Heart left ventricle (tissue), 16 donors: ENCODE measurements at regions of chr1 and their contacts with region 1.

Region 1: DNA sequence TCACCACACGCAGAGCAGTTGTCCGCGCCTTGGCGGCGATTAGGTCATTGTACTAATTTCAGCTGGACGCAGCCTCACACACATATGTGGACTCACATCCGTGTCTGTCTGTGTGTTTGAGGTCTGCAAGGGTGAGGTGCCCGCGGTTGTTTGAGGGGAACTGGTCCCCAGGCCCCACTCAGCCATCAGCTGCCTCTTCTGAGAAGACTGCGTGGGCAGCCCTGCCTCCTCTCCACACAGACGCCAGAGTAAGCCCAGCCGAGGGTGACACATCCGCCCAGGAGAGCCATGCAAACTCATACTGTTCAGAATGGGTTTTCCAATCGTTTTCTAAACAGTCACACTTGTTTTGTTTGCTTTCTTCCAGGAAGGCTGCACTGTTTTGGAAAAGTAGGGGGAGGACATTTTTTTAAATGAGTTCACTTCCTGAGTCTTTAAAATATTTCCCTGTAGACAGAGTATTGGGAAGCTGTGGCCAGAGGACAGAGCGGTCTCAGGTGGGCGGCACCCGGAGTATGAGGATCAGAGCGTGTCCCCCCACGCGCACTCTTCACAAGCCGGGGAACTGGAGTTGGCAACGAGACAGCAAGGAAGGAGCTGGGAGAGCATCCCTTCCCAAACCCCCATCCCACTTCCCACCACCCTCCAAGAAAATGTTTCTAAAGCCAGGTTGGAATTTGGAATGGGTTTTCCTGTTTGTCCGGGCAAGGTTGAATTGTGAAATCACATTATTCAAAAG is 53.3 kb downstream of the TOMM20 start:
- DNase-seq: peak; percentile 78 to 86 (median 86)
- ATAC-seq: peak; percentile 70 to 82 (median 72)
- H3K4me3 ChIP-seq: peak overlapping the region in 10 of 12 donors; percentile 1 to 33 (median 16)
- H3K27ac ChIP-seq: peak overlapping the region; percentile 91 to 99 (median 94)
- H3K4me1 ChIP-seq: peaks cover 9 to 82% (median 67%) of the 10 kb centered on the region in 12 donors
- H3K27me3 ChIP-seq: no peaks in the 10 kb centered on the region
- CTCF ChIP-seq: no peak
- POLR2A ChIP-seq: peak in 1 of 2 donors; percentile 41

Region 2: GRCh38 chr1:234881893-234882771 is 193.2 kb before region 1 on chr1:
- intact Hi-C with region 1: loop called in 5 of 10 experiments (anchors 5 to 10 kb)
- DNase-seq: no peak
- ATAC-seq: no peak
- H3K4me3 ChIP-seq: no peak overlapping the region
- H3K27ac ChIP-seq: no peak overlapping the region
- H3K4me1 ChIP-seq: peaks cover 0 to 50% (median 27%) of the 10 kb centered on the region in 12 donors
- H3K27me3 ChIP-seq: no peaks in the 10 kb centered on the region
- CTCF ChIP-seq: no peak
- POLR2A ChIP-seq: no peak

Region 3: DNA sequence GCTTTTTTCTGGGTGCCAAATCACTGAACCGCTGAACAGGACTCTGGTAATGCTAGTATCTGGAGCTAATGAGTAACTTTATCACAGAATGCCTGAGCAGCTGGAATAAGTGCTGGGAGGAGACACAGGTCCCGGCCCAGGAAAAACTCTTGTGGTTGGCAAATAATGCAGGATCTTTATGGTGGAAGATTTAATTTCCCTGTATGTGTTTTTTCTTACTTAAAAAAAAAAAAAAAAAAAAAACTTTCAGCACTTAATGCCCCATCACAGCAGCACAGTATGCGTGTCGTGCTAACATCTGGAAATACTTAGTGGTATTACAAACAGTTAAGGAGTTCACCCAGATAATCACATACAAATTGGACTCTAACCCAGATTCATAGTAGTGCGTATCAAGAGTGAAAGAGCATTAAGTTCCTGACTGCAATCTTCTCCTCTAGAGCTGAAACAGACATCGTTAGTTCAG is 167.4 kb before region 1 on chr1:
- intact Hi-C with region 1: loop called in 5 of 10 experiments (anchors 5 to 10 kb)
- DNase-seq: no peak
- ATAC-seq: peak; percentile 46 to 81 (median 60)
- H3K4me3 ChIP-seq: no peak overlapping the region
- H3K27ac ChIP-seq: peak overlapping the region; percentile 0 to 90 (median 65)
- H3K4me1 ChIP-seq: peaks cover 6 to 54% (median 30%) of the 10 kb centered on the region in 12 donors
- H3K27me3 ChIP-seq: no peaks in the 10 kb centered on the region
- CTCF ChIP-seq: no peak
- POLR2A ChIP-seq: no peak

Region 4: DNA sequence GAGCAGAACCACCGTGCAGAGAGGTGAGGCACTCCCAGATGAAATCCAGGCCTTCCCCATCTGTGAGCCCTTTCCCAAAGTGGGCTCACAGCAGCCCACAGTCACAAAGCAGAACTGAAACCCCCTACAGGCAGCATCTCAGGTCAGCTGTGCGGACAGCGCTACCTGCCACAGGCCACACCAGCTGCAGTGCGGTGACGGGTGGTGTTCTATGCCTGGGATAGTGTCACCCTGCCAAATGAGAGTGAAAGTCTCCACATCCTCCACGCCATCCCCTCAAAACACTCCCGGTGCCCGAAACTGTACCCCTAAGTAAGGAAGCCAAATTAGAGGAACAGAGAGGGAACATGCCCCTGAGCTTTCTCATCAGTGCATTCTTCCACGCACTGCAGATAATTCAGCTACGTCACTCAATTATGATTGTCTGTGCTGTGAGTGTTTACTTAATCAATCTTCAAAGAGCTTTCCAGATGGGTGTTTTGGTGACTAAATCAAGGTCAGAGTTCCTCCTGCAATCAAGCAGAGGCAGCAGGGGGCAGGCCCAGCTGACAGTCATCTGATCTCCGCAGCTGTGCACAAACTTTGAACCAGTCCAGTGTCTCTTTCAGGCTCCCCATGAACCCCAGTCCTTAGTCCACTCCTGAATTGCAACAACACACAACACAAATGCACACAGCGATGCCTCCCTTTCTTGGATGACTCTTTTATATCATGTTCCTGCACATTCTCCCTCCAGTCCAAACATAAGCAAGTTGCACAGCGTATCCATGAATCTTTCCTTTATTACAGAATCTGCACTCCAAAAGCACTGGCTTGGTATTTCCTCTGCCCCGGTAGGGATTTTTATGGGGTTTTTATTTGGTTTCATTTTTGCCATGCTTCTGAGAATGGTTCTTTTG is 96.7 kb before region 1 on chr1:
- intact Hi-C with region 1: loop called in 4 of 10 experiments (anchors 5 kb)
- DNase-seq: peak in 4 of 5 donors; percentile 48 to 71 (median 60)
- ATAC-seq: peak; percentile 7 to 51 (median 22)
- H3K4me3 ChIP-seq: peak overlapping the region in 2 of 12 donors; percentile 15 to 55
- H3K27ac ChIP-seq: peak overlapping the region; percentile 71 to 98 (median 88)
- H3K4me1 ChIP-seq: peaks cover 15 to 91% (median 45%) of the 10 kb centered on the region in 12 donors
- H3K27me3 ChIP-seq: no peaks in the 10 kb centered on the region
- CTCF ChIP-seq: peak in 5 of 12 donors; percentile 6 to 39 (median 19)
- POLR2A ChIP-seq: no peak

Region 5: GRCh38 chr1:235004840-235005391 is 70.4 kb before region 1 on chr1:
- intact Hi-C with region 1: loop called in 1 of 10 experiments (anchors 5 kb)
- DNase-seq: no peak
- ATAC-seq: no peak
- H3K4me3 ChIP-seq: no peak overlapping the region
- H3K27ac ChIP-seq: no peak overlapping the region
- H3K4me1 ChIP-seq: peaks cover 0 to 33% (median 0%) of the 10 kb centered on the region in 12 donors
- H3K27me3 ChIP-seq: no peaks in the 10 kb centered on the region
- CTCF ChIP-seq: no peak
- POLR2A ChIP-seq: no peak

Region 6: DNA sequence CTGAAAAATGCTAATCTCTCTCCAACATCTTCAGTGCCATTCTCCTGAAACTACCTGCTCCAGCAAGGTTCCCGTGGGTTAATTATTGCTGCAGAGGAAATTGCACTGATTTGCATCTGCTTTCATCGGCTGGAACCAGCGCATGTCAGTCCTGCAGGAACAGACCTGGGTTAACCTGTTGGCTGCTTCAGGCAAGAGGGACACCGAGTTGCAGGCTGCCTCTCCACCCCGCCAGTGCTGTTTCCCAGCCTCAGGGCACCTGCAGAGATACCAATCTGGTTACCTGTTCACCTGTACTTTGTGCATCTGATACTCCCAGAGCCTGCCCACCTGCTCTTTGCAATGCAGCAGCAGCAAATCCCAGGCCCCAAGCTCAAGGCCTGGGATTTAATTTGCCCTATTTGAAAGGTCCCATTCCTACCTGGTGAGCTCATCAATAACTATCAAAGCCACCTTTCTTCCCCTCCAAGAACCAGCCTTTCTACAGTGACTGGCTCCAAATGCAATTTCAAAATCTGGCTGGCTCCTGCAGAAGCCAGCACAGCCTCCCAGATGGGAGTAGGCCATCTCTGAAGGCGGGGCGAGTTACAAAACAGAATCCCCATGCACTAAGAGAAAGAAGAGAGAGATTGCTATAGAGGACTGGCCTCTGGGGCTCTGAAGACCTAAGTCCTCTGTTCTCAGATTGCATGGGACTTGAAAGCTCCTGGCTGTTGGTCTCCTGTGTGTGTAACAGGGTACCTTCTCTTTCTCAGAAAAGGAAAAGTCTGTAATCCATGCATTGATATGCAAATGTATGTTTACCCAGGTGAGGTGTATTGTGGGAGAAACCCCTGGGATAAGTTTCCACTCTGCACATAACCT is 14.5 kb before region 1 on chr1:
- intact Hi-C with region 1: no loop called
- DNase-seq: no peak
- ATAC-seq: peak in 3 of 4 donors; percentile 37 to 66 (median 41)
- H3K4me3 ChIP-seq: no peak overlapping the region
- H3K27ac ChIP-seq: no peak overlapping the region
- H3K4me1 ChIP-seq: peaks cover 0 to 23% (median 8%) of the 10 kb centered on the region in 12 donors
- H3K27me3 ChIP-seq: no peaks in the 10 kb centered on the region
- CTCF ChIP-seq: no peak
- POLR2A ChIP-seq: no peak